WTC11 (cell line): ENCODE measurements at regions of chr13 and their contacts with region 1.

Region 1: GRCh38 chr13:91017031-91017668 is 330.3 kb upstream of the MIR17HG start:
- DNase-seq: peak; percentile 63
- ATAC-seq: peak; percentile 96
- H3K4me3 Mint-ChIP-seq: no peak overlapping the region
- H3K27ac Mint-ChIP-seq: no peak overlapping the region
- H3K4me1 Mint-ChIP-seq: 0 out of 2 replicates have a peak, but pooled peaks cover 4% of the 10 kb centered on the region
- H3K27me3 Mint-ChIP-seq: no peaks in the 10 kb centered on the region
- CTCF ChIP-seq: peak; percentile 81

Region 2: GRCh38 chr13:90872491-90873025 is 144.6 kb before region 1 on chr13:
- CTCF ChIA-PET with region 1: interaction called, 11 read pairs
- POLR2A ChIA-PET with region 1: no interaction called
- DNase-seq: no peak
- ATAC-seq: peak; percentile 78
- H3K4me3 Mint-ChIP-seq: no peak overlapping the region
- H3K27ac Mint-ChIP-seq: no peak overlapping the region
- H3K4me1 Mint-ChIP-seq: peaks cover 10% of the 10 kb centered on the region
- H3K27me3 Mint-ChIP-seq: no peaks in the 10 kb centered on the region
- CTCF ChIP-seq: no peak